Activated CD8-positive, alpha-beta memory T cell treated with anti-CD3 and anti-CD28 coated beads, Interleukin-2, amount 10 ng/mL, durations not matched to agents 7 days and 5 days (primary cell): ENCODE measurements at regions of chr17 and their contacts with region 1.

Region 1: DNA sequence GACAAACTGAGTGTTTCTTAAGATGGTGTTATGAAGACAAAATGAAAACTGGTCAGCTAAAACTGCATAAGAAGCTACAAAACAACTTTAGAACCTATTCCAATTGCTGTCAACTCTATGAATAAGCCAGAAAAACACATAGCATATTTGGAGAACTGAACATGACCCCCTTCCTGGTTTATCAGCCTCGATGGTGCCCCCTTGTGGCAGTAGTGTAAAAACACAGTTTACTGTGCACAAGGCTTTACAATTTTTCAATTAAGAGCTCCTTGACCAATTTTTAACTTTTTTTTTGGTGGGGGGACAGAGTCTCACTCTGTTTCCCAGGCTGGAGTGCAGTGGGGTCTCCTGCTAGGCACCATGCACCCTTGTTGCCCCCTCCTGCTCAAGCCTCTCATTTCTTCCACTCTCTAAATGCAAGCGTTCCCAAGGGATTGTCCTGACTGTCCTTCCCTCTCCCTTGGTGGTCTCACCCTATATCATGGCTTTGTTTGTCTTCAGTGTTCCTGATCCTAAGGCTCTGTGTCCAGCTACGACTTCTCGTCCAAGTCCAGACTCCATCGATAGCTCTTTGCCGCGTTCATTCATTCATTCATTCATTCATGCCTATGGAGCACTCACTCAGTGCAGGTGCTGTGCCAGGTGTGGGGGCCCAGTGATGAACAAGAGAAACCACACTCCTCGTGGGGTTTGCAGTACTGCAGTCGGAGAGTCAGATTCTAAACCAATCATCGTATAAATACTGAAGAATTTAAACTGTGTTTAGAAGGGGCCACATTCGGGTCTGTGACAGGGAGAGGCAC is 7.5 kb downstream of the EIF1 start:
- DNase-seq: peak; percentile 86
- ATAC-seq: peak; percentile 14
- H3K4me3 Mint-ChIP-seq: no peak overlapping the region
- H3K27ac Mint-ChIP-seq: peak overlapping the region; percentile 72
- H3K4me1 Mint-ChIP-seq: peaks cover 21% of the 10 kb centered on the region
- H3K27me3 Mint-ChIP-seq: peaks cover 4% of the 10 kb centered on the region

Region 2: GRCh38 chr17:41615454-41615853 is 80.7 kb before region 1 on chr17:
- CTCF ChIA-PET with region 1: no interaction called
- DNase-seq: no peak
- ATAC-seq: no peak
- H3K4me3 Mint-ChIP-seq: no peak overlapping the region
- H3K27ac Mint-ChIP-seq: no peak overlapping the region
- H3K4me1 Mint-ChIP-seq: no peaks in the 10 kb centered on the region
- H3K27me3 Mint-ChIP-seq: no peaks in the 10 kb centered on the region

Region 3: GRCh38 chr17:41678907-41679739 is 17.0 kb before region 1 on chr17:
- CTCF ChIA-PET with region 1: interaction called, 117 read pairs
- DNase-seq: peak; percentile 93
- ATAC-seq: peak; percentile 89
- H3K4me3 Mint-ChIP-seq: peak overlapping the region; percentile 88
- H3K27ac Mint-ChIP-seq: peak overlapping the region; percentile 94
- H3K4me1 Mint-ChIP-seq: peaks cover 65% of the 10 kb centered on the region
- H3K27me3 Mint-ChIP-seq: no peaks in the 10 kb centered on the region

Region 4: GRCh38 chr17:41710468-41711090 is 14.4 kb after region 1 on chr17:
- CTCF ChIA-PET with region 1: interaction called, 15 read pairs
- DNase-seq: no peak
- ATAC-seq: no peak
- H3K4me3 Mint-ChIP-seq: no peak overlapping the region
- H3K27ac Mint-ChIP-seq: no peak overlapping the region
- H3K4me1 Mint-ChIP-seq: peaks cover 4% of the 10 kb centered on the region
- H3K27me3 Mint-ChIP-seq: peaks cover 17% of the 10 kb centered on the region